SK-N-SH (cell line): ENCODE measurements at regions of chr1 and their contacts with region 1.

Region 1: DNA sequence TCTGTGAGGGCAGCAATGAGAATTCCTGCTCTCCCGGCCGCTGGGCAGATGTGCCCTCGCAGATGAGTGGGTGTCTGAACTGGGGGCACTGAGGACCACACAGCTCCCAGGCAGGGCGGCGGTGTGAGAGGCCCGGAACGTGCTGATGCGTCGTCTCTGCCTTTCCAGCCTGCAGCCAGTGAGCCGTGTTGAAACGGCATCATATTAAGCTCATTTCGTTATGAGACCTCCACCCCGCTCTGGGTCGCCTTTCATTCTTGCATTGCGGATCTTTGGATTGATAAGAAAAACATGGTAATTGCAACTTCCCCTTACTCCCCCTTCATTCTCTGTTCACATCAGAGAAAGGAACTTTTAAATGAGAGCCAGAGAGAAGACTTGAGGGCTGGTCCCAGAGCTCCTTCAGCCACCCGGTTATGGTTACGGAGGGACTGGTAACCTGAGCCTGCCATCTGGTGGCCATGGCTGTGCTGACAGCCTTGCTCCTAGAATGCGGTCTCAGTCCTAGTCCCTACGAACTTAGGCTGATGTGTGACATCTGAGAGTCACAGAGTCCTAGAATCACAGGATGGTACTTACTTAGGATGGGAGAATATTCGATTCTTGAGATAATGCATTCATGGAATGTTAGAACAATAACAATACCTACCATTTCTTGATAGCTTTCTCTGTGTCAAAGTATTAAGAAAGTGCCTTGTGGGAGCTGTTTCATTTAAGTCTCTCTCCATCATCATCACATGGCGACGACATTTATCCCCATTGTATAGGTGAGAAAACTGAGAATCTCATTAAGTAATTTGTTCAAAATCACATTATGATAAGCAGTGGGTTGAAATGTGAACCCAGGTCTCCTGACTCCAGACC is 271.0 kb downstream of the TRABD2B start:
- DNase-seq: peak; percentile 89
- H3K4me3 ChIP-seq: peak overlapping the region; percentile 15 to 57; a peak in 3 of 4 replicates
- H3K27ac ChIP-seq: no peak overlapping the region
- H3K4me1 ChIP-seq: peaks cover 0 to 9% of the 10 kb centered on the region in 2 experiments; a peak in 1 of 4 replicates
- H3K27me3 ChIP-seq: peaks cover 28% of the 10 kb centered on the region
- CTCF ChIP-seq: peak; percentile 87
- EP300 ChIP-seq: no peak
- RAD21 ChIP-seq: peak; percentile 87

Region 2: DNA sequence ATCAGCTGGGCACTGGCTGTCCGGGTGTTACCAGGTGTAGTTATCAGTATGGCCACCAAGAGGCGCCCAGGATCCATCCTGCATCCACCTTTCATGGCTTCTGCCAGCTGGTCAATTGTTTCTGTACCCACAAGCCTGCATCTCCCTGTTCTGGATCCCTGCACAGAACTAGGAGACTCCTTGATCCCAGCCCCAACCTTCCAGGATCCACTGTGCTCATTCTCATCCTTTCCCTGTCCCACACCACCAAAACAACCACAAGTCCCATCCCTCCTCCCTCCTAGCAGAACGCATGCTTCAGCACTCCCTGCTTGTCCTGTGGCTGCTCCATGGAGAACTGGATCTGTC is 337.4 kb before region 1 on chr1:
- CTCF ChIA-PET with region 1: interaction called, 104 read pairs
- POLR2A ChIA-PET with region 1: interaction called, 4 read pairs
- DNase-seq: peak; percentile 80
- H3K4me3 ChIP-seq: no peak overlapping the region
- H3K27ac ChIP-seq: no peak overlapping the region
- H3K4me1 ChIP-seq: peaks cover 0 to 10% of the 10 kb centered on the region in 2 experiments; a peak in 1 of 4 replicates
- H3K27me3 ChIP-seq: no peaks in the 10 kb centered on the region
- CTCF ChIP-seq: peak; percentile 69
- EP300 ChIP-seq: no peak
- RAD21 ChIP-seq: peak; percentile 84

Region 3: DNA sequence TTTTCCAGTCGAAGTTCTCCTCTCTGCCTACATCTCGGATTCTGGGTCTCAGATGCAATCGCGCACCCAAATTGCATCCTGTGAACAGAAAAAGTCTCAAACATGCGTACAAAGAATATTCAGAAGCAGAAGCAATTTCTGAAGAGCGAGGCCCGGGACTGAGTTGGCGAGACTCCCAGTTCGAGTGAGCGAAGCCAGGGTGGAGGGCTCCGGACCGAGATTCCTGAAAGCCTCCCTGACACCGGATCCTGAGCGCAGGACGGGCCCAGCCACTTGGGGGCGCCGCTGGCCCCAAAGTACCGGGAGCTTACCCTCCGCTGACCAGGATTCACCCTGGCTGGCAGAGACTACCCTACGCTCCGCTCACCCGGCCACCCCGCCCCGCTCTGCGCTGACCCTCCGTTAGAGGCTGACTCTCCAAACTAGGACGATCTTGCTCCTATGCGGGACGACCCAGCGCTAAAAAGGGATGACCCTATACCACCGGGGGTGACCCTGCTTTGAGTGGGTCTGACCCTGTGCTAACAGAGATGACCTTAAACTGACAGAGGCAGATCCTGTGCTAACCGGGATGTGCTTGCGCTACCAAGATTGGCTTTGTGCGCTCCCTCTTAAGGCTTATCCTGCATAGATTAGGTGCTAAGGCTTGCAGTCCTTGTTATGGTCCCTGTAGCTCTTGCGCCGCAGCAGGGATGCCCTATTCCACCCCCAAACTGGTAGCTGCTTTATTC is 276.2 kb before region 1 on chr1:
- CTCF ChIA-PET with region 1: interaction called, 42 read pairs
- POLR2A ChIA-PET with region 1: no interaction called
- DNase-seq: peak; percentile 67
- H3K4me3 ChIP-seq: no peak overlapping the region; a peak in 1 of 4 replicates
- H3K27ac ChIP-seq: no peak overlapping the region
- H3K4me1 ChIP-seq: no peaks in the 10 kb centered on the region; a peak in 1 of 4 replicates
- H3K27me3 ChIP-seq: peaks cover 73% of the 10 kb centered on the region
- CTCF ChIP-seq: peak; percentile 53
- EP300 ChIP-seq: no peak
- RAD21 ChIP-seq: peak; percentile 53

Region 4: GRCh38 chr1:47502746-47503370 is 223.4 kb before region 1 on chr1:
- CTCF ChIA-PET with region 1: interaction called, 25 read pairs
- POLR2A ChIA-PET with region 1: no interaction called
- DNase-seq: no peak
- H3K4me3 ChIP-seq: no peak overlapping the region
- H3K27ac ChIP-seq: no peak overlapping the region
- H3K4me1 ChIP-seq: peaks cover 0 to 3% of the 10 kb centered on the region in 2 experiments; a peak in 1 of 4 replicates
- H3K27me3 ChIP-seq: peaks cover 13% of the 10 kb centered on the region
- CTCF ChIP-seq: no peak
- EP300 ChIP-seq: no peak
- RAD21 ChIP-seq: no peak

Region 5: GRCh38 chr1:47618830-47619229 is 107.4 kb before region 1 on chr1:
- CTCF ChIA-PET with region 1: no interaction called
- POLR2A ChIA-PET with region 1: no interaction called
- DNase-seq: no peak
- H3K4me3 ChIP-seq: no peak overlapping the region
- H3K27ac ChIP-seq: no peak overlapping the region
- H3K4me1 ChIP-seq: peaks cover 0 to 9% of the 10 kb centered on the region in 2 experiments; a peak in 1 of 4 replicates
- H3K27me3 ChIP-seq: no peaks in the 10 kb centered on the region; the same call in 1 of the 2 replicates
- CTCF ChIP-seq: no peak
- EP300 ChIP-seq: no peak
- RAD21 ChIP-seq: no peak

Region 6: GRCh38 chr1:47696740-47697441 is 29.3 kb before region 1 on chr1:
- CTCF ChIA-PET with region 1: interaction called, 11 read pairs
- POLR2A ChIA-PET with region 1: no interaction called
- DNase-seq: no peak
- H3K4me3 ChIP-seq: no peak overlapping the region
- H3K27ac ChIP-seq: no peak overlapping the region
- H3K4me1 ChIP-seq: no peaks in the 10 kb centered on the region
- H3K27me3 ChIP-seq: peaks cover 15% of the 10 kb centered on the region; the same call in 1 of the 2 replicates
- CTCF ChIP-seq: no peak
- EP300 ChIP-seq: no peak
- RAD21 ChIP-seq: no peak

Region 7: GRCh38 chr1:47738560-47739182 is 12.4 kb after region 1 on chr1:
- CTCF ChIA-PET with region 1: interaction called, 44 read pairs
- POLR2A ChIA-PET with region 1: no interaction called
- DNase-seq: peak; percentile 74
- H3K4me3 ChIP-seq: no peak overlapping the region; a peak in 1 of 4 replicates
- H3K27ac ChIP-seq: no peak overlapping the region
- H3K4me1 ChIP-seq: no peaks in the 10 kb centered on the region
- H3K27me3 ChIP-seq: no peaks in the 10 kb centered on the region
- CTCF ChIP-seq: peak; percentile 70
- EP300 ChIP-seq: no peak
- RAD21 ChIP-seq: peak; percentile 89

Region 8: DNA sequence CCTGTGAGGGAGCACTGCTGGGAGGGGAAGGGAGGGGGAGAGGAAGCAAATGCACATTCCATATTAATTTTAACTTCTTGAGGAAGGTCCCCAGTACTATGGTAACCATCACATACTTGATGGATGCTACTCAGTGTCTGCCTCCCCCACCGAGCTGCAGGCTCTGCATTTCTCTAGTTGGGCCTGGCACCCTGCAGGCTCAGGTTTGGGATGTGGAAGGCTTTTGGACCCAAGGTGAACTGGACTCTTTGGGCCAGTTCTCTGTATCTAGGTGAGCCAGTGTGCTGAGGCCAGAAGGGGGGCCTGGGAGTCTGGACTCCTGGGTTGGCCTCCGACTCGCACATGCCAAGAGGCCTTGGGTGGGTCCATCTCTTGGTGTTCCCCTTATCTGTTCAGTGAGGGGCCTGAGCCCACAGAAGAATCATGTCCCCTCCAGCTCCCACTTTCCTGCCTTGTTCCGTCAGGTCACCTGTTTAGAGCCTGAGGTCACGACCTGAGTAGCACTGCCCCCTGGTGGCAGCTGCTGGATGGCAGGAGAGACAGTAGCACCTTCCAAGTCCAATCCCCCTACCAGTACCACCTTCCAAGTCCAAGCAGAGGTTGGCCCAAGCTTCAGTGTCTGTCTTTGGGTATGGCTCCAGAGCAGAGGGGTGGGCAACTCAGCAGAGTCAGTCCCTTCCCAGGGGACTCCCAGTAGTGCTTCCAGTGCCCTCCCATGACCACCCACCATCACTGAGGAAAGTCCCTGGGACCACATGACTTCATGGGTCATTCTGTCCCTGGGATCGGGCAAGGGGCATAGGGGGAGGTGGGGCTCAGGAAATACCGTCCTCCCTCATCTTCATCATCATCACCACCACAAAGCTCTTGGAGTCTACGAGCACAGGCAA is 29.1 kb after region 1 on chr1:
- CTCF ChIA-PET with region 1: interaction called, 11 read pairs
- POLR2A ChIA-PET with region 1: no interaction called
- DNase-seq: peak; percentile 44
- H3K4me3 ChIP-seq: no peak overlapping the region
- H3K27ac ChIP-seq: no peak overlapping the region
- H3K4me1 ChIP-seq: no peaks in the 10 kb centered on the region
- H3K27me3 ChIP-seq: no peaks in the 10 kb centered on the region
- CTCF ChIP-seq: peak; percentile 63
- EP300 ChIP-seq: no peak
- RAD21 ChIP-seq: peak; percentile 24; the same call in 1 of the 2 replicates